T-cell (primary cell): ENCODE measurements at regions of chr18 and their contacts with region 1.

Region 1: DNA sequence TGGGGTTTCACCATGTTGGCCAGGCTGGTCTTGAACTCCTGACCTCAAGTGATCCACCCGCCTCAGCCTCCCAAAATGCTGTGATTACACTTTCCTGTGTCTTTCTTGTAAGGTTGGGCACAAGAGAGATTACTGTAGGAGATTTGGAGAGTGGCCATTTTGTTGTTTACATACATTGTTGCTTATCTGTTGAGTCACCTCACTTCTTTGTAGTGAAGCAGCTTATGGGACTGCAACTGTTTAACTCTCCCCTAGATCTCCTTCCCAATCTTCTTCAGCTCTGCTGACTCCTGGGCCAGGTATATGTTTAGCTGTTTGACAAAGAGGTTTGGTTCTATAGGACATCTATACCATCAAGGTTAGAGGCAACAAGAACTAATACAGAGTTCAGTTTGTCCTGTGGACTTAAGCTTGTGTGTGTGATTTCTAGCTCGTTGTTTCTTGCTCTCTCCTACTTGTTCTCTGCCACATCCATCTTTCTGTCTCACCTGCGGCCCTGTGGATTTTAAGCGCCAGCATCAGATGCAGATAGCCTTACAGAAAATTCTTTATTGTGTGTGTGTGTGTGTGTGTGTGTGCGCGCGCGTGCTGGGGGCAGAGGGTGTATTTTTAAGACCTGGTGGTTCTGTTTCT is 95.4 kb downstream of the HAUS1 start:
- DNase-seq: no peak
- ATAC-seq: peak in 3 of 4 experiments; percentile 47 to 72 (median 65)
- H3K4me3 ChIP-seq: no peak overlapping the region
- H3K4me3 Mint-ChIP-seq: peak overlapping the region in 1 of 3 donors; percentile 23
- H3K27ac ChIP-seq: no peak overlapping the region
- H3K27ac Mint-ChIP-seq: peak overlapping the region; percentile 65 to 72
- H3K4me1 ChIP-seq: peaks cover 13 to 15% of the 10 kb centered on the region in 2 experiments
- H3K4me1 Mint-ChIP-seq: peaks cover 70 to 75% (median 71%) of the 10 kb centered on the region in 3 donors
- H3K27me3 ChIP-seq: no peaks in the 10 kb centered on the region
- H3K27me3 Mint-ChIP-seq: no peaks in the 10 kb centered on the region

Region 2: GRCh38 chr18:45993389-45993788 is 206.2 kb before region 1 on chr18:
- CTCF ChIA-PET with region 1: no interaction called
- POLR2A ChIA-PET with region 1: no interaction called
- DNase-seq: no peak
- ATAC-seq: no peak
- H3K4me3 ChIP-seq: no peak overlapping the region
- H3K4me3 Mint-ChIP-seq: no peak overlapping the region
- H3K27ac ChIP-seq: no peak overlapping the region
- H3K27ac Mint-ChIP-seq: no peak overlapping the region
- H3K4me1 ChIP-seq: peaks cover 10 to 17% of the 10 kb centered on the region in 2 experiments
- H3K4me1 Mint-ChIP-seq: peaks cover 15 to 26% (median 20%) of the 10 kb centered on the region in 3 donors
- H3K27me3 ChIP-seq: no peaks in the 10 kb centered on the region
- H3K27me3 Mint-ChIP-seq: no peaks in the 10 kb centered on the region

Region 3: GRCh38 chr18:46243095-46243494 is 43.5 kb after region 1 on chr18:
- CTCF ChIA-PET with region 1: no interaction called
- POLR2A ChIA-PET with region 1: no interaction called
- DNase-seq: no peak
- ATAC-seq: no peak
- H3K4me3 ChIP-seq: no peak overlapping the region
- H3K4me3 Mint-ChIP-seq: no peak overlapping the region
- H3K27ac ChIP-seq: no peak overlapping the region
- H3K27ac Mint-ChIP-seq: no peak overlapping the region
- H3K4me1 ChIP-seq: peaks cover 5 to 12% of the 10 kb centered on the region in 2 experiments
- H3K4me1 Mint-ChIP-seq: peaks cover 43 to 54% (median 47%) of the 10 kb centered on the region in 3 donors
- H3K27me3 ChIP-seq: no peaks in the 10 kb centered on the region
- H3K27me3 Mint-ChIP-seq: no peaks in the 10 kb centered on the region

Region 4: GRCh38 chr18:46291149-46291548 is 91.5 kb after region 1 on chr18:
- CTCF ChIA-PET with region 1: no interaction called
- POLR2A ChIA-PET with region 1: no interaction called
- DNase-seq: peak in 3 of 35 experiments; percentile 13 to 23 (median 13)
- ATAC-seq: peak in 1 of 4 experiments; percentile 23
- H3K4me3 ChIP-seq: no peak overlapping the region
- H3K4me3 Mint-ChIP-seq: no peak overlapping the region
- H3K27ac ChIP-seq: no peak overlapping the region
- H3K27ac Mint-ChIP-seq: no peak overlapping the region
- H3K4me1 ChIP-seq: no peaks in the 10 kb centered on the region
- H3K4me1 Mint-ChIP-seq: peaks cover 0 to 2% (median 0%) of the 10 kb centered on the region in 3 donors
- H3K27me3 ChIP-seq: no peaks in the 10 kb centered on the region
- H3K27me3 Mint-ChIP-seq: no peaks in the 10 kb centered on the region

Region 5: DNA sequence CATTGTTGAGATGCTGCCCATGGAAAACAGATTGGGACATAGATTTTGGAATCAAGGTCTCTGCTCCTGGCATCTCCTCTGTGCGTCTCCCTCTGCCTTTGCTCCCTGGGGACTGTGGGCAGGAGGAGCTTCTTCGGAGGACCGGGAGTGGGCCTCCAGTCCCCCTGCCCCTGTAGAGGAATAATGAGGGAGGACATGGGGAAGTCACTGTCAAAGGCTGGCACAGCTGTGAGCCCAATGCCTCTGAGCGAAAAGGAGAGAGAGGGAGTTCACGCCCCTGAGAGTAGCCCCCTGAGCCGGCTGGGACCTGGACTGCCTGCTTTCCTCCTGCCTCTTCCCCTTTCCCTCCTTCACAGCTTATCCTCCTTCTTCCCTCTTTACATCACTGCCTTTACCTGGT is 262.4 kb after region 1 on chr18:
- CTCF ChIA-PET with region 1: interaction called in 1 of 2 experiments, 14 read pairs
- POLR2A ChIA-PET with region 1: no interaction called
- DNase-seq: no peak
- ATAC-seq: no peak
- H3K4me3 ChIP-seq: no peak overlapping the region
- H3K4me3 Mint-ChIP-seq: no peak overlapping the region
- H3K27ac ChIP-seq: no peak overlapping the region
- H3K27ac Mint-ChIP-seq: no peak overlapping the region
- H3K4me1 ChIP-seq: no peaks in the 10 kb centered on the region
- H3K4me1 Mint-ChIP-seq: no peaks in the 10 kb centered on the region
- H3K27me3 ChIP-seq: peaks cover 0 to 24% of the 10 kb centered on the region in 2 experiments
- H3K27me3 Mint-ChIP-seq: peaks cover 3 to 7% of the 10 kb centered on the region in 2 donors